HEK293 (cell line): ENCODE measurements at regions of chr2 and their contacts with region 1.

Region 1: DNA sequence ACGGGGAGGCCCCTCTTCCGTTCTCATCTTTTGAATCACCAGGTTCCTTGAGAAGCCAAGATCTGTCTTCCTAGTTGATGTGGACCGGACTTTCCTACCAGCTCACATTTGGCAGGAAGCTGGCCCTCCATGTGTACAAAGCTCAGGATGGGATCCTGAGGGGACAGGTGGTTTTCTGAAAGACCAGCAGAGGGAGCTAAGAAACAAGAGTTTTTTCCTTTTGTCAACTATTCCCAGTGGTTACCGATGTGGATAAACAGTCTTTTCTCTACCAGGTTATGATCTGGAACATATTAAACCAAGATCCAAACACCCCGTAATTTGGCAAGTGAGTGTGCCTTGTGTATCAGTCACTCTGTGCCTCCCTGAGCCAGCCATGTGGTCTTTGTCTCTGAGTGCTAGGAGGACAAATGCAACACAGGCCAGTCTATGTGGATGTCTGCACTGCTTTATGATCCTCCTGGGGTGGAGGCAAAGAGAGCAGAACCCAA is 25.1 kb upstream of the ARHGAP25 start:
- H3K4me3 ChIP-seq: no peak overlapping the region
- H3K27ac ChIP-seq: no peak overlapping the region
- H3K4me1 ChIP-seq: no peaks in the 10 kb centered on the region; the same call in 1 of the 2 replicates
- CTCF ChIP-seq: 0 out of 2 replicates have a peak, but pooled peaks have one; percentile 45

Region 2: DNA sequence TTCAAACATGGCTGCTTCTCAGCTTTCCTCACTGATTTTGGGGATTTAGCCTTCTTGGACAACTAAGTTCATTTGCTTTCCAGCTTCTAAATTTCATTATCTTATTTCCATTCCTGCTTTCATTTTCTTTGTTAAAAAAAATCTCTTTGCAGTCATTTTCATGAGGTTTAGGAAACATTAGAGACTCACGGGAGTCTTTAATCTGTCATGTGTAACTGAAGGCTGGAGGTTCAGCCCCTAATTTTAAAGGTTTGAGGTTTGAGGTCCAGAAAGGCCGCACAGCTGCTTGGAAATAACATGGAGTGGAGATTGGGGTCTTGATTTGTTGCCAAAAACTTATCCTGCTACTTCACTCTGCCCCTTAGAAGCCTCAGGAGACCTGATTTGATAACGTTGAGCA is 35.8 kb before region 1 on chr2:
- CTCF ChIA-PET with region 1: no interaction called
- POLR2A ChIA-PET with region 1: no interaction called
- H3K4me3 ChIP-seq: no peak overlapping the region
- H3K27ac ChIP-seq: no peak overlapping the region
- H3K4me1 ChIP-seq: no peaks in the 10 kb centered on the region
- CTCF ChIP-seq: no peak

Region 3: GRCh38 chr2:68690851-68691250 is 18.6 kb before region 1 on chr2:
- CTCF ChIA-PET with region 1: interaction called, 10 read pairs
- POLR2A ChIA-PET with region 1: no interaction called
- H3K4me3 ChIP-seq: no peak overlapping the region
- H3K27ac ChIP-seq: no peak overlapping the region
- H3K4me1 ChIP-seq: peaks cover 2% of the 10 kb centered on the region; the same call in 1 of the 2 replicates
- CTCF ChIP-seq: no peak

Region 4: DNA sequence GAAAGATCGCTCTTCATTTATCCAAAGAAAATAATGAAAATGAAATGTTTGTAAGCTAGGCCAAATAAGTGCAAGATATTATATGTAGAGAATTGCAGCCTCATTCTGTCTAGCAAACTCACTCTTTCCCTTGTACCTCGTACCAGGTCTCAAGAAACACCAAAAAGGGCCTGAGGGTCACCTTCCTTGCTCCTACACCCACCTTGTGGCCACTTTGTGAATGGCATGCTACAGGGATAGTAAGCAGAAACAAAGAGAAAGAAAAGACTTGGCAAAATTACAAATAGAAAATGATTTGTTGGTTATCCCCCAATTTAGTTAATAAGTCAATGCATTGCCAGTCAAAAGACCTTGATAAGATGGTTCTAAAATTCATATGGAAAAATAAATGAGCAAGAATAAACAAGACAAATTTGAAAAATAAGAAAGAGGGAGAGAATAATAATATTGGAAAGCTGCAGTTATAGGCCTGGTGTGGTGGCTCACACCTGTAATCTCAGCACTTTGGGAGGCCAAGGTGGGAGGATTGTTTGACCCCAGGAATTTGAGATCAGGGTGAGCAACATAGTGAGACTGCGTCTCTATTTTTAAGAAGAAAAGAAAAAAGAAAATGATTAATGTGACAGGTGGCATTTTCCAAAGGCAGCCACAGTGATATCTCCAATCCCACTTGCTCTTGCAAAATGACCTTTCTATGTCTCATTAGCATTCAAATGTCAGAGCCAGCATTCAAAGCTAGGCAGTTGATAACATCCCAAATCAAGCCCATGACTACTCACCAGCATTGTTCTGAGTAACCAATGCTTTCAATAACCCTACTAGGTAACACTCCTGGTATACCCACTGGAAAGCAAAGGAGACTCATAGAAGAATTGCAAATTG is 200.6 kb after region 1 on chr2:
- CTCF ChIA-PET with region 1: interaction called, 12 read pairs
- POLR2A ChIA-PET with region 1: no interaction called
- H3K4me3 ChIP-seq: no peak overlapping the region
- H3K27ac ChIP-seq: no peak overlapping the region
- H3K4me1 ChIP-seq: 0 out of 2 replicates have a peak, but pooled peaks cover 2% of the 10 kb centered on the region
- CTCF ChIP-seq: peak; percentile 24; the same call in 1 of the 2 replicates